ENCODE measurements at regions of chr10 and their contacts with region 1.

Region 1: GRCh38 chr10:21399392-21400035 is 126.0 kb downstream of the SKIDA1 start:
- DNase-seq: peak; percentile 89 to 91
- H3K4me3 ChIP-seq: no peak overlapping the region
- H3K4me3 Mint-ChIP-seq: peak overlapping the region; percentile 58
- H3K27ac Mint-ChIP-seq: peak overlapping the region; percentile 93
- H3K4me1 ChIP-seq: peaks cover 54% of the 10 kb centered on the region
- H3K4me1 Mint-ChIP-seq: peaks cover 35% of the 10 kb centered on the region
- H3K27me3 ChIP-seq: no peaks in the 10 kb centered on the region
- H3K27me3 Mint-ChIP-seq: no peaks in the 10 kb centered on the region
- CTCF ChIP-seq: no peak

Region 2: DNA sequence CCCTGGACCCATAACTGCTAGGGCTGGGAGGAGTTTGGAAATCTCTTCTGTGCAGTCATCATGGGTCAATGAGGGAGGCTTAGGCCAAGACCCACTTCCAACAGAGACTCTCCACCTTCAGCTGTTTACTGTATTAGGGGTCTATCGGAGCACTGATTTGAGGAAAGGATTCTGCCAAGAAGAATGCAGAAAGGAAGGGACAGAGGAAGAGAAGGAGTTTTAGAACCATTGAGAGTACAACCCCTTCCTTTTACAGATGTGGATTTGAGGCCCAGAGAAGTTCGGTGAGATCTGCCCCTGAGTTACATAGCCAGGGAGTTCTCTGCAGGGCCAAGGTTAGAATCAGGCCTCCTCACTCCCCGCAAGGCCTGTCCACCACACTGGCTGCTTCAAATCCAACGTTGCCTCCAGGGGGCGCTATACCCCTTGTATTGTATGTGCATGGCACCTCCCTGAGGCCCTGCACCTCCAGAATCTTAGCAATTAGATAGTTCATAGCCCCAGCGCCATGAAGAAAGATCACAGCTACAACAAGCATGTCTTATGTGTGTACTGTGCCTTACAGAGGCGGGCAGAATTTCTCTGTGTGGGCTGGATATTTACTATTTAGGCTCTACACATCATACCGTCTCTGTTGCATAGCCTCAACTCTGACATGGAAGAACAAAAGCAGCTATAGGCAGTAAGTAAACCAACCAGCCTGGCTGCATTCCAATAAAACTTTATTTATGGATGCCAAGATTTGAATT is 120.8 kb before region 1 on chr10:
- CTCF ChIA-PET with region 1: no interaction called
- POLR2A ChIA-PET with region 1: no interaction called
- intact Hi-C with region 1: loop called (anchors 1 kb)
- DNase-seq: peak; percentile 96 to 97
- H3K4me3 ChIP-seq: no peak overlapping the region
- H3K4me3 Mint-ChIP-seq: no peak overlapping the region
- H3K27ac Mint-ChIP-seq: peak overlapping the region; percentile 50
- H3K4me1 ChIP-seq: peaks cover 29% of the 10 kb centered on the region
- H3K4me1 Mint-ChIP-seq: peaks cover 34% of the 10 kb centered on the region
- H3K27me3 ChIP-seq: no peaks in the 10 kb centered on the region
- H3K27me3 Mint-ChIP-seq: no peaks in the 10 kb centered on the region
- CTCF ChIP-seq: peak; percentile 89 to 95

Region 3: GRCh38 chr10:21304203-21304602 is 95.3 kb before region 1 on chr10:
- CTCF ChIA-PET with region 1: no interaction called
- POLR2A ChIA-PET with region 1: no interaction called
- intact Hi-C with region 1: loop called (anchors 1 kb)
- DNase-seq: peak; percentile 83 to 86
- H3K4me3 ChIP-seq: no peak overlapping the region
- H3K4me3 Mint-ChIP-seq: peak overlapping the region; percentile 46
- H3K27ac Mint-ChIP-seq: peak overlapping the region; percentile 93
- H3K4me1 ChIP-seq: peaks cover 27% of the 10 kb centered on the region
- H3K4me1 Mint-ChIP-seq: peaks cover 41% of the 10 kb centered on the region
- H3K27me3 ChIP-seq: no peaks in the 10 kb centered on the region
- H3K27me3 Mint-ChIP-seq: no peaks in the 10 kb centered on the region
- CTCF ChIP-seq: no peak

Region 4: DNA sequence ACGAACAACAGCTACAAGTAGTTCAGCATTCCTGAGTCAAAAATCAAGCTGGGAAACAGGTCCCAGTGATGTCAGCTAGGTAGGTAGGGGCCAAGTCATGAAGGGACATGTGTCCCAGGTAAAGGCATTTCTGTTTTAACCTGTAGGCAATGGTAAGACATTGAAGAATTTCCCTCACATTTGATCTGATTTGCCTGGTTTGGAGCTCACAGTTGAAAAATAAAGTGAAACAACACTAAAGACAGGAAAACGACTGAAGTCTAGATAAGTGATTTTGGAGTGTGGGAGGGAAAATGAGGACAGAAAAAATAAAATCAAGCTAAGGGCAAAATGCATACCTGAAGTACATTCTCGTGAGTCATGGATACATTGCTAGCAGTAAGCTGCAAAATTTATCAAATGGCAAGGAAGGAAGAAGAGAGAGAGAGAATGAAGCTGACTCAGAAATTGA is 43.9 kb before region 1 on chr10:
- CTCF ChIA-PET with region 1: no interaction called
- POLR2A ChIA-PET with region 1: no interaction called
- intact Hi-C with region 1: loop called (anchors 1 kb)
- DNase-seq: no peak
- H3K4me3 ChIP-seq: no peak overlapping the region
- H3K4me3 Mint-ChIP-seq: no peak overlapping the region
- H3K27ac Mint-ChIP-seq: peak overlapping the region; percentile 4
- H3K4me1 ChIP-seq: peaks cover 41% of the 10 kb centered on the region
- H3K4me1 Mint-ChIP-seq: peaks cover 43% of the 10 kb centered on the region
- H3K27me3 ChIP-seq: no peaks in the 10 kb centered on the region
- H3K27me3 Mint-ChIP-seq: no peaks in the 10 kb centered on the region
- CTCF ChIP-seq: no peak

Region 5: DNA sequence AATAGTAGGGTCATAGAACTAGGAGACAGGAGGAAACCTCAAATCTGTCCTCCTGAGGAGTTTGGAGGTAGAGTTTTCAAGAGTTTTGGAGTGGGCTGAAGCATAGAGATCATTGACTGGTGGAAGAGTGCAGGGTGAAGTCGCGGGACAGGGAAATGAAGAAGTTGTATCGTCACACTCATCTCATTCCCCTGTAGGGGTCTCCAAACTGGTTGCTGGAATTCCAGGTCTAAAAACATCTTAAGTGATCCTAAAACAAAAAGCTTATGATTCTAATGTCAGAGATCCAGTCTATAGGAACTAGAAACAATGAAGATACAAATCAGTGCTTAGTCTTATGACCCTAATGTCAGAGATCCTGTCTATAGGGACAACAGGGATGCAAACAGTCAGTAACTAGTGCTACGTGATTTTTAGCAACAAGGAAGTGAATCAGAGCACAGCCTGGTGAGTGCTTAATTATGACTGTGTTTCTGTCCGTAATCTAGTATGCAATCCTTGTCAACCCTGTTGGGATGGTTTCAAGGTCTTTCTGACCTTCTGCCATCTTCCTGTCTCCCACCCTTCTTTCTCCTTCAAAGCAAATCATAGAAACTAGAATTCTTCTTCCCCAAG is 13.4 kb before region 1 on chr10:
- CTCF ChIA-PET with region 1: no interaction called
- POLR2A ChIA-PET with region 1: no interaction called
- intact Hi-C with region 1: loop called (anchors 2 kb)
- DNase-seq: no peak
- H3K4me3 ChIP-seq: no peak overlapping the region
- H3K4me3 Mint-ChIP-seq: no peak overlapping the region
- H3K27ac Mint-ChIP-seq: no peak overlapping the region
- H3K4me1 ChIP-seq: 0 out of 2 replicates have a peak, but pooled peaks cover 4% of the 10 kb centered on the region
- H3K4me1 Mint-ChIP-seq: peaks cover 21% of the 10 kb centered on the region
- H3K27me3 ChIP-seq: no peaks in the 10 kb centered on the region
- H3K27me3 Mint-ChIP-seq: no peaks in the 10 kb centered on the region
- CTCF ChIP-seq: peak in 1 of 2 experiments; percentile 19

Region 6: DNA sequence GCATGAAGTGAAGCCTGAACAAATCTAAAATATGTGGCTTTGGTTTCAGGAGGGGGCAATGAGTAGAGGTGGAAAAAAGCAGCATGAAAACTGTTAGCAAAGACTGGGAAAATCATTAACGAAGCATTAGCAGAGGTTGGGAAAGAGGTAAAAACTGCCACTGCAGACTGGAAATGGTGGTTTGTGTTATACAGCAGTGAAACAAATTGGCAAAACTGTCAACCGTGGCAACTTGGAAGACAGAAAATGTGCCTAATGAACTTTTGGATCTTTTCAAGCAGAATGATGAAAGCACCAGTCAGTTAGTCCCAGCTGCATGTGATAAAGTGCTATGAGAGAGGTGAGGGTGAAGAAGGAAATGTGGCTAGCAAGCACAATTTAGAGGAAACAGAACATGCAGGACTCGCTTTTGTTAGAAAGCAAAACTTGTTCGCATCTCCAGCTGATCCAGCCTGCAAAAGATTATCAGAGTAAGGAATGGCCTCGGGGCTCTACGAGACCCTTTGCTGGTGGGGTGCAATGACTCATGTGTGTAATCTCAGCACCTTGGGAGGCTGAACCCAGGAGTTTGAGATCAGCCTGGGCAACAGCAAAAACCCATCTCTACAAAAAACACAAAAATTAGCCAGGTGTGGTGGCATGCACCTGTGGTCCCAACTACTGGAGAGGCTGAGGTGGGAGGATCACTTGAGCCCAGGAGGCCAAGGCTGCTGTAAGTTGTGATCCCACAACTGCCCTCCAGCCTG is 80.2 kb after region 1 on chr10:
- CTCF ChIA-PET with region 1: no interaction called
- POLR2A ChIA-PET with region 1: interaction called, 4 read pairs
- intact Hi-C with region 1: loop called (anchors 2 kb)
- DNase-seq: peak in 1 of 2 experiments; percentile 19
- H3K4me3 ChIP-seq: no peak overlapping the region
- H3K4me3 Mint-ChIP-seq: no peak overlapping the region
- H3K27ac Mint-ChIP-seq: peak overlapping the region; percentile 17
- H3K4me1 ChIP-seq: peaks cover 25% of the 10 kb centered on the region
- H3K4me1 Mint-ChIP-seq: peaks cover 25% of the 10 kb centered on the region
- H3K27me3 ChIP-seq: no peaks in the 10 kb centered on the region
- H3K27me3 Mint-ChIP-seq: no peaks in the 10 kb centered on the region
- CTCF ChIP-seq: no peak